CD4-positive, alpha-beta T cell (primary cell): ENCODE measurements at regions of chr15 and their contacts with region 1.

Region 1: GRCh38 chr15:85618956-85619491 is 175.7 kb downstream of the KLHL25 start:
- DNase-seq: peak in 12 of 14 experiments; percentile 15 to 81 (median 42)
- ATAC-seq: peak; percentile 80
- H3K4me3 ChIP-seq: peak overlapping the region; percentile 39
- H3K4me3 Mint-ChIP-seq: no peak overlapping the region
- H3K27ac ChIP-seq: peak overlapping the region; percentile 26 to 65
- H3K27ac Mint-ChIP-seq: no peak overlapping the region
- H3K4me1 ChIP-seq: peaks cover 41% of the 10 kb centered on the region
- H3K4me1 Mint-ChIP-seq: peaks cover 41% of the 10 kb centered on the region
- H3K27me3 ChIP-seq: no peaks in the 10 kb centered on the region
- H3K27me3 Mint-ChIP-seq: no peaks in the 10 kb centered on the region
- CTCF ChIP-seq: no peak

Region 2: GRCh38 chr15:85563328-85563727 is 55.7 kb before region 1 on chr15:
- CTCF ChIA-PET with region 1: no interaction called
- POLR2A ChIA-PET with region 1: no interaction called
- intact Hi-C with region 1: no loop called
- DNase-seq: no peak
- ATAC-seq: no peak
- H3K4me3 ChIP-seq: no peak overlapping the region
- H3K4me3 Mint-ChIP-seq: no peak overlapping the region
- H3K27ac ChIP-seq: no peak overlapping the region
- H3K27ac Mint-ChIP-seq: no peak overlapping the region
- H3K4me1 ChIP-seq: peaks cover 2% of the 10 kb centered on the region
- H3K4me1 Mint-ChIP-seq: peaks cover 22% of the 10 kb centered on the region
- H3K27me3 ChIP-seq: no peaks in the 10 kb centered on the region
- H3K27me3 Mint-ChIP-seq: no peaks in the 10 kb centered on the region
- CTCF ChIP-seq: no peak

Region 3: GRCh38 chr15:85658816-85659215 is 39.8 kb after region 1 on chr15:
- CTCF ChIA-PET with region 1: interaction called, 3 read pairs
- POLR2A ChIA-PET with region 1: no interaction called
- intact Hi-C with region 1: loop called in 1 of 2 experiments (anchors 5 kb)
- DNase-seq: no peak
- ATAC-seq: no peak
- H3K4me3 ChIP-seq: no peak overlapping the region
- H3K4me3 Mint-ChIP-seq: no peak overlapping the region
- H3K27ac ChIP-seq: no peak overlapping the region
- H3K27ac Mint-ChIP-seq: no peak overlapping the region
- H3K4me1 ChIP-seq: no peaks in the 10 kb centered on the region
- H3K4me1 Mint-ChIP-seq: no peaks in the 10 kb centered on the region
- H3K27me3 ChIP-seq: no peaks in the 10 kb centered on the region
- H3K27me3 Mint-ChIP-seq: no peaks in the 10 kb centered on the region
- CTCF ChIP-seq: no peak

Region 4: GRCh38 chr15:85840065-85840801 is 221.2 kb after region 1 on chr15:
- CTCF ChIA-PET with region 1: no interaction called
- POLR2A ChIA-PET with region 1: no interaction called
- intact Hi-C with region 1: loop called in 1 of 2 experiments (anchors 5 kb)
- DNase-seq: peak; percentile 56 to 88 (median 74)
- ATAC-seq: peak; percentile 96
- H3K4me3 ChIP-seq: peak overlapping the region; percentile 33
- H3K4me3 Mint-ChIP-seq: peak overlapping the region; percentile 54
- H3K27ac ChIP-seq: no peak overlapping the region
- H3K27ac Mint-ChIP-seq: no peak overlapping the region
- H3K4me1 ChIP-seq: peaks cover 10% of the 10 kb centered on the region
- H3K4me1 Mint-ChIP-seq: no peaks in the 10 kb centered on the region
- H3K27me3 ChIP-seq: no peaks in the 10 kb centered on the region
- H3K27me3 Mint-ChIP-seq: peaks cover 17% of the 10 kb centered on the region
- CTCF ChIP-seq: peak; percentile 97